Uterus (tissue), 4 donors: ENCODE measurements at regions of chr12 and their contacts with region 1.

Region 1: GRCh38 chr12:121776190-121777098 is 17.0 kb downstream of the RHOF start:
- DNase-seq: peak; percentile 71 to 77
- H3K4me3 ChIP-seq: no peak overlapping the region
- H3K27ac ChIP-seq: no peak overlapping the region
- H3K4me1 ChIP-seq: no peaks in the 10 kb centered on the region
- H3K27me3 ChIP-seq: no peaks in the 10 kb centered on the region
- CTCF ChIP-seq: peak; percentile 77 to 82 (median 79)
- POLR2A ChIP-seq: no peak

Region 2: GRCh38 chr12:121697098-121697698 is 79.2 kb before region 1 on chr12:
- intact Hi-C with region 1: loop called (anchors 5 kb)
- DNase-seq: no peak
- H3K4me3 ChIP-seq: no peak overlapping the region
- H3K27ac ChIP-seq: no peak overlapping the region
- H3K4me1 ChIP-seq: no peaks in the 10 kb centered on the region
- H3K27me3 ChIP-seq: no peaks in the 10 kb centered on the region
- CTCF ChIP-seq: peak; percentile 58 to 81 (median 70)
- POLR2A ChIP-seq: no peak